ENCODE measurements at regions of chr5 and their contacts with region 1.

Region 1: DNA sequence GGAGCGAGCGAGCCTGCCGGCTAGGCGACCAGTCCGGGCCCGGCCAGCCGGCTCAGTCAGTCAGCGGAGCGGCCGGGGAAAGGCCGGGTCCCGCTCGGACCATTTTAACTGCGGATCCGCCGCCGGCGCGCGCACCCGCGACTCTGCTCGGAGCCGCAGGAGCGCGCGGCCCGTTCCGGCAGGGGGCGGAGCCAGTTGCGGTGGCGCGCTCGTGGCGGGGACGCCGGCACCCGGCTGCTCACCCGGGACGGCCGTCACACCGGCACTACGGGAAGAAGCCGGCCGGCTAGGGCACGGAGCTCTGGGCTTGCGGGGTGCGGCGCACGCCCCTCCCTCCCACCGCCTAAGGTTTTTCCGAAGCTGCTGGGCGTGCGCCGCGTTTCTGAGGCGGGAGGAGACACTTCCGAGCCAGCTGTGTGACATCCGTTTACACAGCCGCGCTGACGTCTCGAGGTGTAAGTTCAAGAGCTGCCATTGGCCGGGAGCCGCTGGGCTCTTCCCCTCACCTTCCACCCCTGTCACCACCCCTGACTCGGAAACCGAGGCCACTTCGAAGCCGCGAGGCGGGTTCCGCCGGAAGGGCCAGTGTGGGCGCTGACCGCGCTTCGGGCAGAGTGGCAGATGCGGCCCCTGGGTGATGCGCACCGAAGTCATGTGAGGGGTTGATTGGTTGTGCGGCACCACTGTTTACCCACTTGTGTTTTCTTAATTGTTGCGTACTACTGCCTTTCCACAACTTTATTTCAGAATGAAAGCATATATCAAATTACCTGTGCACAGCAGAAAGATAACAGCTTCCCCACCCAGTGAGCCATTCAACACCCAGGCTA is at the start of gene FBXL17:
- DNase-seq: peak; percentile 78

Region 2: DNA sequence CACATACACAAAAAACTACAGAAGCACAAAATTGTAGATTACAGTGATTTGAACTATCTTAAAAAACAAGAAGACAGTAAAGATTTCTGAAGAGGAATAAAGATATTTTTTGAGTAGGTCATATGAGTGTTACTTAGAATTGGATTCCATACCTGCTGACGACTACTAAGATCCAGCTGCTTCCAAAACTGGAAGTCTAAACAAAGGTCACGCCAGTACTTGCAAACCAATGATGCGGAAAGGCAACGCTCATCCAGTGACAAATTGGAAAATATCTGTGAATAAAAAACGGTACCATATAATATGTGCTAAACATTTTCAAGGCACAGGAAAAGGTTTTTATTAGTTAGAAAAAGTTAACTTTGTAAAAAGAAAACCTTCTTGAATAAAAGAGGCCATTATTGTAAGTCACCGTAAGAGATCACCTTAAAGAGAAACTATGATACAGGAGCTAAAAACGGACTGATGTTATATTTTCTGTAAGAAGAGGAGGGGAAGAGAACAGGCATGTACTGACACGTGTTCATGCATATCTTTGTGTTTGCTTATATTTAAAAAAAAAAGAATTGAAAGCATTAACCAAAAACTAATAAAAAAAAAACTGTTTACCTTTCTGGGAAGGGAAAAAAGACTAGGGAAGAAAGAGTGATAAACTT is 14.4 kb before region 1 on chr5:
- CTCF ChIA-PET with region 1: no interaction called
- POLR2A ChIA-PET with region 1: interaction called, 16 read pairs
- DNase-seq: no peak